ENCODE measurements at regions of chr7 and their contacts with region 1.

Region 1: GRCh38 chr7:87506246-87507180 is 31.0 kb upstream of the ABCB4 start:
- DNase-seq: no peak
- H3K4me3 ChIP-seq: no peak overlapping the region
- H3K27ac ChIP-seq: no peak overlapping the region
- H3K4me1 ChIP-seq: no peaks in the 10 kb centered on the region
- H3K27me3 ChIP-seq: no peaks in the 10 kb centered on the region
- CTCF ChIP-seq: peak; percentile 67

Region 2: GRCh38 chr7:86833360-86833759 is 673.2 kb before region 1 on chr7:
- CTCF ChIA-PET with region 1: no interaction called
- POLR2A ChIA-PET with region 1: interaction called, 11 read pairs
- intact Hi-C with region 1: no loop called
- DNase-seq: no peak
- H3K4me3 ChIP-seq: no peak overlapping the region
- H3K27ac ChIP-seq: no peak overlapping the region
- H3K4me1 ChIP-seq: no peaks in the 10 kb centered on the region
- H3K27me3 ChIP-seq: no peaks in the 10 kb centered on the region
- CTCF ChIP-seq: no peak

Region 3: GRCh38 chr7:87543623-87544022 is 37.1 kb after region 1 on chr7:
- CTCF ChIA-PET with region 1: no interaction called
- POLR2A ChIA-PET with region 1: no interaction called
- intact Hi-C with region 1: no loop called
- DNase-seq: no peak
- H3K4me3 ChIP-seq: no peak overlapping the region
- H3K27ac ChIP-seq: no peak overlapping the region
- H3K4me1 ChIP-seq: no peaks in the 10 kb centered on the region
- H3K27me3 ChIP-seq: no peaks in the 10 kb centered on the region
- CTCF ChIP-seq: no peak

Region 4: DNA sequence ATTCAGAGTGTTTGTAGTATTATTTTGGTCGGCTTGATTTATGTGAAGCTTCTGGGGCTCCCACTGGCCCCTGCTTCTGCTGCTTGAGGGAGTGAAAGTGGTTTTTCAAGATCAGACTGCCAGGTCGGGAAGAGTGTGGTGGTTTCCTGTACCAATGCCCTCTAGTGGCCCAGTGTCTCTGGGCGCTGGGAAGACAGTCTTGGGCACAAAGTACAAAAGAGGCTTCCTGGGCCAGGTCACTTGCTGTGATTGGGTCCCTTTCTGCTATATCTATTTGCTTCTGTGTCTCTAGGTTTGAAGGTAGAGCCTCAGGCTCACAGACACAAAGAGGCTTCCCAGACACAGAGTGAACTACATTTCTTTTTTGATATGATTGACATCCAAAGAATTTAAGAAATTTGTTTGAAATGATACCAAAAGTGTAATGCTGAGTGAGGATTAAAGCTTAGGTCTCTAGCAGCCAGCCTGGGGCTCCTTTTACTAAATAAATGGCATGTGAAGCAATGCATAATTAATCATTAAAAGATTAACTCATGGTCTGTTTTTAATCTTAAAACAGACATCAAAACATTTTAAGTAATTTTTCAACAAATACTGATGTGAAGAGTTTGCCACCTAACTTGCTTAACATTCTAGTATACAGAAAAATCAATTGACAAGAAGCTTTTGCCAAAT is 57.9 kb after region 1 on chr7:
- CTCF ChIA-PET with region 1: no interaction called
- POLR2A ChIA-PET with region 1: no interaction called
- intact Hi-C with region 1: loop called (anchors 5 kb)
- DNase-seq: peak in 1 of 2 experiments; percentile 36
- H3K4me3 ChIP-seq: no peak overlapping the region
- H3K27ac ChIP-seq: no peak overlapping the region
- H3K4me1 ChIP-seq: no peaks in the 10 kb centered on the region
- H3K27me3 ChIP-seq: no peaks in the 10 kb centered on the region
- CTCF ChIP-seq: peak; percentile 58; the same call in 1 of the 2 replicates

Region 5: DNA sequence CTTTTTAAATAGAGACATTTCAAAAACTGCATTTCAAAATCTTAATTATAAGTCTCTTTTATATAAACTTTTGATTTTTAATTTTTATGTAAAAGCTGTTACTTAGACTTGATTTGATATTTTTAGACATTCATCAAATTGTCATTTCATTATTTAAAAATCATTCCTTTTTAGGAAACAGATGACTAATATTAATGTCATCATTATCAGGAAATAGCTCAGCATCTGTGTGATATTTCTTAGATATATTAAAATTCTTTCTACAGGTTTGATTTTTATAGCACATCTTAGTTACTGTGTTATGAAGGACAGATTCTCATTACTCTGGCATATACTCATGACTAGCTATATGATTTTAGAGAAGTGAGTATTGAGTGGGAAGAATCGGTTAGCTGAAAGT is 138.9 kb after region 1 on chr7:
- CTCF ChIA-PET with region 1: no interaction called
- POLR2A ChIA-PET with region 1: no interaction called
- intact Hi-C with region 1: no loop called
- DNase-seq: no peak
- H3K4me3 ChIP-seq: no peak overlapping the region
- H3K27ac ChIP-seq: no peak overlapping the region
- H3K4me1 ChIP-seq: no peaks in the 10 kb centered on the region
- H3K27me3 ChIP-seq: no peaks in the 10 kb centered on the region
- CTCF ChIP-seq: no peak

Region 6: DNA sequence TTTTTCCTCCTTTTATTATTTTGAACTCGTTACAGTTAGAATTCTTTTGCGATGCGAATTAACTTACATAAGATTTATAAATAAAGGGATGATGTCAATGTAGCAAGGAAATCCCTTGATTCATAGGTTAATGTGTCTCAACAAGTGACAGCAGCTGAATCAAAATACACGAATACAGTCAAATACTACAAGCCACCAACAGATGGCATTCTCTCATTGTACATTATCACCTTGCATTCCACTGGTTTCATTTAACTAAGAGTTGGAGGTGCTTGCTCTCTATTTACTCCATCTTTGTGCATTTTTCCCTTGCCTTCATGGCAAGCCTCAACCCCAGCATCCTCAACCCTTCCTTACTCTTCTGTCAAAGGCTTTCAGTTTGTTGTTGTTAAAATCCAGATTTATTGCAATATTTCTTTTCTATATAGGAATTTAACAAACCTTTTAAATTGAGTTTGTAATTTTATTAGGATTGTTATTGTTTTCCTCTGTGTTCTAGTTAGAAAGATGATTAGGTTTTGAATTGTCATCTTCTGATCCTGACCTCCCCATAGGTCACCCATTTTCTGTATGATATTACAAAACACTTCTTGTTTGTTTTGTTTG is 291.4 kb after region 1 on chr7:
- CTCF ChIA-PET with region 1: no interaction called
- POLR2A ChIA-PET with region 1: no interaction called
- intact Hi-C with region 1: loop called (anchors 2 kb)
- DNase-seq: peak in 1 of 2 experiments; percentile 35
- H3K4me3 ChIP-seq: no peak overlapping the region
- H3K27ac ChIP-seq: no peak overlapping the region
- H3K4me1 ChIP-seq: no peaks in the 10 kb centered on the region
- H3K27me3 ChIP-seq: no peaks in the 10 kb centered on the region
- CTCF ChIP-seq: peak; percentile 74

Region 7: DNA sequence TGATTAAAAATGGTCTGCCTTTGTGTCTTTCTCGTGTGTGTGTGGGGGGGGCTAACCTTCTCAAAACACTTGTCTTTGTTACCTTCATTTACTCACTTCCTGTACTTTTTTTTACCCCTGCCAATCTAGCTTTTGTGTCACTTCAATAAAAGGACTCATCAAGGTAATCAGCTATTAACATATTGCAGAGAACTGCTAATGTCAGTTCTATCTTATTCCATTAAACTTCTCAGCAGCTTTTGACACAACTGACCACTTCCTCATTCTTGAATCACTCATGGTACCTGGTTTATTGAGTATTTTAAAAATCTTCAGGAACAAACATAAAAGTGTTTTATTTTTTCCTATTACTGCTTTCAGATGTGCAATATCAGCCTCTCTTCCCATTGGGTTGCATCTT is 309.9 kb after region 1 on chr7:
- CTCF ChIA-PET with region 1: no interaction called
- POLR2A ChIA-PET with region 1: no interaction called
- intact Hi-C with region 1: no loop called
- DNase-seq: no peak
- H3K4me3 ChIP-seq: no peak overlapping the region
- H3K27ac ChIP-seq: no peak overlapping the region
- H3K4me1 ChIP-seq: no peaks in the 10 kb centered on the region
- H3K27me3 ChIP-seq: no peaks in the 10 kb centered on the region
- CTCF ChIP-seq: no peak

Region 8: GRCh38 chr7:88090671-88091070 is 584.2 kb after region 1 on chr7:
- CTCF ChIA-PET with region 1: no interaction called
- POLR2A ChIA-PET with region 1: no interaction called
- intact Hi-C with region 1: no loop called
- DNase-seq: no peak
- H3K4me3 ChIP-seq: no peak overlapping the region
- H3K27ac ChIP-seq: no peak overlapping the region
- H3K4me1 ChIP-seq: no peaks in the 10 kb centered on the region
- H3K27me3 ChIP-seq: no peaks in the 10 kb centered on the region
- CTCF ChIP-seq: no peak

Region 9: DNA sequence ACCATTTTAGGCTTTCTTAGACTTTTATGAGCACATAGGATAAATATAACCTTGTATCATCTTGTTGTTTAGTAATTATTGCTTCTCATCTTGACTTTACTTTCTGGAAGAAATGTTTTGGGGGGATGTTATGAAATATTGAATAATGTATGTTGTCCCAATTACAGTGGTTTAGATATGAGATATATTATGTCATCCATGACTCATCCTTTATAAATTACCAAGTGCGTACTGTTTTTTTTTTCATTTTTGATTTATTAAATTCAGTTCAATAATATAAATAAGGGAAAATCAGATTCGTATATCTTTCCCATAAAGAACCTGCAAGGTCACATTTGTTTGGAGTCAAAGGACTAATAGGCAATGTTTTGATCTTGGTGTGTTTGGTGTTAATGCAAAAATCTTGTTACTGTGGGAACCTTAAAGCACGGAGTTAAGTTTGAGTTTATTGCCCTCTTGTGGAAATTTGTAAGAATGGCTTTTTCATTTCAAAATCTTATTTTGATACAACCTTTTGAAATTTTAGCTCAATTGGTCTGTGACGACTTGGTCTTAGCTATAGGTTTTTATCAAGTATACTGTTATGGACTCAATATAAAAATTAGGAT is 604.7 kb after region 1 on chr7:
- CTCF ChIA-PET with region 1: interaction called, 3 read pairs
- POLR2A ChIA-PET with region 1: no interaction called
- intact Hi-C with region 1: loop called (anchors 1 kb)
- DNase-seq: peak in 1 of 2 experiments; percentile 54
- H3K4me3 ChIP-seq: no peak overlapping the region
- H3K27ac ChIP-seq: no peak overlapping the region
- H3K4me1 ChIP-seq: no peaks in the 10 kb centered on the region
- H3K27me3 ChIP-seq: no peaks in the 10 kb centered on the region
- CTCF ChIP-seq: peak; percentile 76